Activated naive CD4-positive, alpha-beta T cell treated with anti-CD3 and anti-CD28 coated beads for 36 hours (primary cell): ENCODE measurements at regions of chr6 and their contacts with region 1.

Region 1: DNA sequence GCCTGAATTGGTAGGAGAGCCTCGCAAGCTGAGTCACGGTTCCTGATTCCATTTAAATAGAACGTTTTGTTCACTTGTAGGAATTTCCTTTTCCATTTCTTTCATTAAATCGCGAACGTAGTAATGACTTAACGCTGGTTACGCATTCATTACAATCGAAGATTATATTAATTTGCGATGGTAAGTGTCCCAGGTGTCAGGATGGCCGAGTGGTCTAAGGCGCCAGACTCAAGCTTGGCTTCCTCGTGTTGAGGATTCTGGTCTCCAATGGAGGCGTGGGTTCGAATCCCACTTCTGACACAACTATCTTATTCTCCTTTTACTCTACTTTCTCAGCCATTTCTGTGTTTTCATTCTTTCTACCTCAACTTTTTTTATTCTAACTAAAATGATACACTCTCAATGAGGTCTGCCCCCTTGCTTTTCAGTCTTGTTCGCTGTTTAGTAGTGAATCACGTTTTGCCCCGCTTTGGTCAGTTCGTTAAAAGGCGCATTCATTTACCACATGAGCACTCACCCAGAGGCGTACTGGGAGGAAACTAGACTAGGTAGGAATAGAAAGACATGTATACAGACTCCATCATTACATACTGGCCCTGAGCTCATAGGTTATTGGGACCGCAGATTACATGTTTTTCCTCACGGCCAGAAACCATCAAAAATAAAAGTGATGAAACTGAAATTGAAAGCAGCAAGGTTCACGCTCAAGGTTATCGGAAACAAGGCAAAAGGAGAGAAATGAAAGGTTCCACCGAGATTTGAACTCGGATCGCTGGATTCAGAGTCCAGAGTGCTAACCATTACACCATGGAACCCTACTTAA is 17.3 kb upstream of the TRIM27 start:
- DNase-seq: peak; percentile 87
- H3K4me3 Mint-ChIP-seq: peak overlapping the region; percentile 93
- H3K27ac Mint-ChIP-seq: peak overlapping the region; percentile 99
- H3K4me1 Mint-ChIP-seq: peaks cover 40% of the 10 kb centered on the region
- H3K27me3 Mint-ChIP-seq: no peaks in the 10 kb centered on the region

Region 2: GRCh38 chr6:27479319-27480182 is 1461.5 kb before region 1 on chr6:
- CTCF ChIA-PET with region 1: no interaction called
- intact Hi-C with region 1: loop called (anchors 5 kb)
- DNase-seq: peak; percentile 90
- H3K4me3 Mint-ChIP-seq: no peak overlapping the region
- H3K27ac Mint-ChIP-seq: no peak overlapping the region
- H3K4me1 Mint-ChIP-seq: peaks cover 6% of the 10 kb centered on the region
- H3K27me3 Mint-ChIP-seq: no peaks in the 10 kb centered on the region

Region 3: GRCh38 chr6:28586962-28587745 is 353.9 kb before region 1 on chr6:
- CTCF ChIA-PET with region 1: no interaction called
- intact Hi-C with region 1: loop called (anchors 5 kb)
- DNase-seq: peak; percentile 80
- H3K4me3 Mint-ChIP-seq: peak overlapping the region; percentile 85
- H3K27ac Mint-ChIP-seq: no peak overlapping the region
- H3K4me1 Mint-ChIP-seq: peaks cover 21% of the 10 kb centered on the region
- H3K27me3 Mint-ChIP-seq: peaks cover 61% of the 10 kb centered on the region

Region 4: DNA sequence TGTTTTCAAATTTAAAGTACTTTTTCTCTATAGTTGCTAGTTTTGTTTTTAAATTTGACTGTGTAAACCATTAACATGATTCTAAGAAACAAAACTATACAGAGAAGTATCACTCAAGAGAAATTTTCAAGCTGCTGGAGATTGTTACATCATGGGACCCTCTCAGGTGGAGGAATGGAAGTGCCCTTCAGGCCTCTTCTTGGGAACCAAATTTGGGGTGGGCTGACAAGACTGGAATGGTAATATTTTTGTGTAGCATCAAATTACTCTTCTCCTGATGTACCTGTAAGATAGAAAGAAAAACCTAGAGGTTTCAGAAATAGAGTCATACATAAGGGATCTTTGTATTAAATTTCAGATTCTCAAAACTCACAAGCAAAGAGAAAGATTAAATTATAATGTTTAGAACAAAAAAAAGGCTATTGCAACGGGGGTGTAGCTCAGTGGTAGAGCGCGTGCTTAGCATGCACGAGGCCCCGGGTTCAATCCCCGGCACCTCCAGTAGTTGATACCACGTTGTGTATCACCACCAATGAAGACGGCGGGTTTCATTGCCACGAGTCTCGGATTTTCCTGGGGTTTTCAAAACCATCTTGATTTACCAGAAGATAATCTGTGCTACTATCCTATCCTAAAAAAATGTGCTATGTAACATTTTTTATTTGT is 221.7 kb before region 1 on chr6:
- CTCF ChIA-PET with region 1: no interaction called
- intact Hi-C with region 1: no loop called
- DNase-seq: peak; percentile 41
- H3K4me3 Mint-ChIP-seq: no peak overlapping the region
- H3K27ac Mint-ChIP-seq: no peak overlapping the region
- H3K4me1 Mint-ChIP-seq: no peaks in the 10 kb centered on the region
- H3K27me3 Mint-ChIP-seq: peaks cover 65% of the 10 kb centered on the region

Region 5: DNA sequence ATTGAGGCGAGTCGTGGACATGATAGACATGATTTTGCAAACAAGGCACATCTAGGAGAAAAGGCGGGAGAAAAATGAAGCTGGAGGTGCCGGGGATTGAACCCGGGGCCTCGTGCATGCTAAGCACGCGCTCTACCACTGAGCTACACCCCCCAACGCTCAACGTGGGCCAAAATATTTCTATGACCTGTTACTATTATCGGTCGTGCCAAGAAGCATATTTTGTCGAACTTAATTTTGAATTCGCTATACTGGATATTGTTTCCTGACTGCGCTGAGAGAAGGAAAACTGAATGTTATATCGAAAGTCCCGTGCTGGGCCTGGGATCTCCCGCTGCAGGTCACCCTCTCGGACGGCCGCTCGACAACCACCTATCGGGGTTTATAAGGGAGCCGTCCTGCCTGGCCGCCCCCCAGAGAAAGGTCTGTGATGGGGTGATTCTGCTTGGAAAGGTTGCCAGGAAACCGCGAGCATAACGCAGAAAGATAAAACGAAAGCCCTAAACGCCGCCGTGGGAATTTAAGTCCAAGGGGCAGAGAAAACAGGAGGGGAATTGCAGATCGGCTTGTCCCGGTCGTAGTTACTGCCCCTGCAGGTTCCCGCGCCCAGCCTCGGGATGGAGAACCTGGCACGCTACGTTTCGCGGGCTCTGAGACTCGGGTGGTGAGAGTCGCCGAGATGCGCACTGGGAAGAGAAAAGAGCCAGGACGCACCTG is 77.3 kb before region 1 on chr6:
- CTCF ChIA-PET with region 1: interaction called, 3 read pairs
- intact Hi-C with region 1: loop called (anchors 1 kb)
- DNase-seq: peak; percentile 89
- H3K4me3 Mint-ChIP-seq: peak overlapping the region; percentile 86
- H3K27ac Mint-ChIP-seq: peak overlapping the region; percentile 92
- H3K4me1 Mint-ChIP-seq: peaks cover 33% of the 10 kb centered on the region
- H3K27me3 Mint-ChIP-seq: peaks cover 3% of the 10 kb centered on the region

Region 6: DNA sequence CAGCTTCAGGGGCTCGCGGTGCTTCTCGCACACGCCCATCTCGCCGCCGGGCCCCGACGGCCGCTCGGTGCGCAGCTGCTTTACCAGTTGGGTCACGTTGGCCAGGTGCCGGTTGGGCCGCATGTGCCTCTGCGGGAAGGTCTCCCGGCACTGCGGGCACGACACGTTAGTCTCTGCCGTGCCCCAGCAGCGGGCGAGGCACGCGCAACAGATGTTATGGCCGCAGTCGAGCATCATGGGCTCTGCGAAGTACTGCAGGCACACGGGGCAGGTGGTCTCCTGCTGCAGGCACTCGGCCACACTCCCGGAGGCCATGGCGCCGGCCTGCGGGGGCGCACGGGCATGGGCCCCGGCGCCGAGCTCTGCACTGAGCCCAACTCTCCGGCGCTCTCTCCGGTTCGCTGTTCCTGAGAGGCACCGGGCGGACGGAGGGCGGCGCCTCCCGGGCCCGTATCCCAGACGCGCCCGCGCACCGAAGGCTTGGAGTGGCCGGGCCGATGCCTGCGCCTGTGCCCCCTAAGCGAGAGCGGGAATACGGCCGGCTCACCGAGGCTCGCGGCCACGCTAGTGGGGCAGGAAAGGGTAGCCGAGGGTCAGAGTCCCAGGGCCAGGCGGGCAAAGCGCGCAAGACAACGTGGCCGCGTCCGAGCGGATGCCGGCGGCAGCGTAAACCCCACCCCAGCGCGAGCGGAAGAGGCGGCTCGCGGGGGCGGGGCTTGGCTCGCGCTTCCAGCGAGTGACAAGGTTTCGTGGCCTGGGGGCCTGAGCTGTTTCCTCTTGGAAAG is 17.6 kb before region 1 on chr6 and contains the start of gene TRIM27:
- CTCF ChIA-PET with region 1: interaction called, 5 read pairs
- intact Hi-C with region 1: loop called (anchors 1 kb)
- DNase-seq: peak; percentile 77
- H3K4me3 Mint-ChIP-seq: peak within 1 kb of the TSS; percentile 93
- H3K27ac Mint-ChIP-seq: peak within 1 kb of the TSS; percentile 95
- H3K4me1 Mint-ChIP-seq: peaks cover 39% of the 10 kb centered on the region
- H3K27me3 Mint-ChIP-seq: no peaks in the 10 kb centered on the region
- total RNA-seq, gene TRIM27: 35.8 to 41.4 TPM

Region 7: GRCh38 chr6:29016559-29017427 is 75.7 kb after region 1 on chr6:
- CTCF ChIA-PET with region 1: interaction called, 7 read pairs
- intact Hi-C with region 1: loop called (anchors 1 kb)
- DNase-seq: peak; percentile 92
- H3K4me3 Mint-ChIP-seq: peak overlapping the region; percentile 90
- H3K27ac Mint-ChIP-seq: peak overlapping the region; percentile 84
- H3K4me1 Mint-ChIP-seq: peaks cover 12% of the 10 kb centered on the region
- H3K27me3 Mint-ChIP-seq: peaks cover 9% of the 10 kb centered on the region

Region 8: DNA sequence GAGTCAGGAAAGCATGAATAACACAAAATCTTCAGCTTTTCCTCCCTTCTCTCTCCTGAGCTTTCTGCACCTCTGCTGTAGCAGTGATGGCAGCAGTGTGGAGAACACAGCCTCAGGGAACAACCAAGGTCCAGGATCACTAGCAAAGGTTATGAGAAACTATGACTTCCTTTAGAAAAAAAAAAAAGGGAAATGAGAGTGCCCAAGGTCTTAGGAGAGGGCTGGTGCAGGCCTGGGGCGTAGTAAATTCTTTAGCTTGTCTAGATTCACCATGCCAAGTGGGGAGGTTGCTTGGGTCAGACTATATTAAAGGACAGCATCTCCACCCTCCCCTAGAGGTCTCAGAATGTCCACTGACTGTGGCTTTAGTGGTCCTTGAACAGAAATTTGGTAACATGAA is 1079.6 kb after region 1 on chr6:
- CTCF ChIA-PET with region 1: no interaction called
- intact Hi-C with region 1: no loop called
- DNase-seq: no peak
- H3K4me3 Mint-ChIP-seq: no peak overlapping the region
- H3K27ac Mint-ChIP-seq: no peak overlapping the region
- H3K4me1 Mint-ChIP-seq: no peaks in the 10 kb centered on the region
- H3K27me3 Mint-ChIP-seq: no peaks in the 10 kb centered on the region